Kidney (tissue), 22 donors: ENCODE measurements at regions of chr1 and their contacts with region 1.

Region 1: DNA sequence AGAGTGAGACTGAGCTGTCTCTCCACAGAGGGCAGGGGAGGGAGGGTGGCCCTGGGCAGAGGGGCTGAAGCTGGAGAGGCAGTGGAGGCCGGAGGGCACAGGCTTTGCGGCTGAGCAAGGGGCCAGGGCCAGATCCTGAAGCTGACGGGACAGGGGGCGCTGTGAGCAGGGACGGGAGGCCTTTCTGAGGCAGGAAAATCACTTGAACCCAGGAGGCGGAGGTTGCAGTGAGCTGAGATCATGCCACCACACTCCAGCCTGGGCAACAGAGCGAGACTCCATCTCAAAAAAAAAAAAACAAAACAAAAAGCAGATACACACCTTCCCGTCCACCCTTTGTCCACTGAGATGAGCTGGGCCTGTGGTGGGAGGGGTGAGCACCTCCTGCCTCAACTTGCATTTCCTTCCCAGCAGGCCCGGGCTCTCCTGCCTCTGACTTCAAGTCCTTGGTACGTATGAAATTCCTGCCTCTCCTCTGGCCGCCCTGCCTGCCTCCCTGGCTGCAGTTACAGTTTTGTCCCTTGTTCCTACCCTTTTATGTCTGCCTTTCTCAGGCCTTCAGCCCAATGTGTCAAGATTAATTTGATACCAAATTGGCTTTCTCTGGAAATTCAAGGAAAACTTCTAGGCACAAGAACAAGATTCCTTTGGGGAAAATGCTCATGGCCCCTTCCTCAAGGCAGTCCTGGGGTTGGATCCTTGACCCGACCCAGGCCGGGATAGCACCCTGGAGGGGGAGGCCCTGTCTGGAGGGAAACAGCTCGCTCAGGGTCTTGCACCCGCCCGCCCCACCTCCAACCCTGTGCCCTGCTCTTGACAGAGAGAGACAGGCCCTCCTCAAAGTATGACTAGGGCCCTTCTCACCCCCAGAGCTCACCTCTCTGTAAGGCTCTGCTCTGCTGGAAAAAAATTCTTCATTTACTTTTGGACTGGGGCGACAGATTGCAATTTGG is 11.2 kb upstream of the ADAMTSL4 start:
- DNase-seq: peak in 2 of 5 donors; percentile 44 to 77
- H3K4me3 ChIP-seq: no peak overlapping the region
- H3K27ac ChIP-seq: no peak overlapping the region
- H3K4me1 ChIP-seq: no peaks in the 10 kb centered on the region
- H3K27me3 ChIP-seq: no peaks in the 10 kb centered on the region
- CTCF ChIP-seq: no peak

Region 2: DNA sequence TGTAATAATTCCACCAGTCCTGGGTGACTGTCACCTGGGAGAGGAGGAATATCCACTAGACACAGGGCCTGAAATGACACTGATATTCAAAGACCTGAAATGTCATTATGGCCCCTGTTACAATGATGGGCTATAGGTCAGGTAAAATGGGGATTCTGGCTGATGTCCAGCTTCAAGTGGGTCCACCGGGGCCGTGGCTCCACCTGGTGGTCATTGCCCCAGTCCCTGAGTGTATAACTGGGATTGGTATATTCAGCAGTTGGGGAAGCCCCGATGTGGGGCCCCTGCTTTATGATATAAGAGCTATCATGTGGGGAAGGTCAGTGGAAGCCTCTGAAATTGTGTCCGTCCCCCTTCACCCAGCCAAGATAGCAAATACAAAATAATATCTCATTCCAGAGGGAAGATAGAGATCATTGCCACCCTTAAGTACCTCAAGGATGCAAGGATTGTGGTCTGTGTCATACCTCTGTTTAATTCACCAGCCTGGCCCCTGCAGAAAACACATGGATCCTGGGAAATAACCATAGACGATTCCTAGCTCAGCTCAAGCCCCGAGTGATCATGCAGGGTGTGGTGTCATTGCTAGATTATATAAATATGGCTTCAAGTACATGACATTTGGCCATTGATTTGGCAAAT is 368.9 kb before region 1 on chr1:
- intact Hi-C with region 1: no loop called
- DNase-seq: peak in 4 of 5 donors; percentile 70 to 78 (median 75)
- H3K4me3 ChIP-seq: no peak overlapping the region
- H3K27ac ChIP-seq: no peak overlapping the region
- H3K4me1 ChIP-seq: no peaks in the 10 kb centered on the region
- H3K27me3 ChIP-seq: no peaks in the 10 kb centered on the region
- CTCF ChIP-seq: peak; percentile 64

Region 3: GRCh38 chr1:150464422-150464826 is 73.6 kb before region 1 on chr1:
- intact Hi-C with region 1: loop called (anchors 10 kb)
- DNase-seq: peak in 4 of 5 donors; percentile 59 to 73 (median 66)
- H3K4me3 ChIP-seq: no peak overlapping the region
- H3K27ac ChIP-seq: no peak overlapping the region
- H3K4me1 ChIP-seq: no peaks in the 10 kb centered on the region
- H3K27me3 ChIP-seq: no peaks in the 10 kb centered on the region
- CTCF ChIP-seq: peak; percentile 68

Region 4: DNA sequence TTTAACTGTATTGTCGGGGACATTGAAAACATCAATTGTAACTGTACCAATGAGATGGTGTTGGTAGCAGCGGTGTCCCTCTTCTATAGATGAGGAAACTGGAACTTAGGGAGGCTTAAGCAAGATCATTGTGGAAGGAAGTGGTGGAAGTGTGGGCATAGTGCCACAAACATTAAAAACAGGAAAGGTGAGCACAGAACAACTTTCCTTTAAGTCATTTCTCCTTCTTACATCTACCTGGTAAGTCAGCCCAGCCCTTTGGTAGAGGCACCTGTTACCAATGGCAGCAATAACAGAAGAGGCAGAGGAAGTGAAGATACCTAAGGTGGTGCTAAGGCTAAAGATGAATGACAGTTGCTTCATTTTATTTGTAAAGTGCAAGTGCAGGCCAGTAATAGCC is 239.5 kb after region 1 on chr1:
- intact Hi-C with region 1: no loop called
- DNase-seq: no peak
- H3K4me3 ChIP-seq: no peak overlapping the region
- H3K27ac ChIP-seq: no peak overlapping the region
- H3K4me1 ChIP-seq: no peaks in the 10 kb centered on the region
- H3K27me3 ChIP-seq: no peaks in the 10 kb centered on the region
- CTCF ChIP-seq: no peak